ENCODE measurements at regions of chr7 and their contacts with region 1.

Region 1: GRCh38 chr7:4641667-4642467 is 40.2 kb upstream of the FOXK1 start:
- DNase-seq: peak; percentile 95
- H3K4me3 Mint-ChIP-seq: peak overlapping the region; percentile 92
- H3K27ac Mint-ChIP-seq: peak overlapping the region; percentile 94
- H3K4me1 Mint-ChIP-seq: peaks cover 12% of the 10 kb centered on the region
- H3K27me3 Mint-ChIP-seq: no peaks in the 10 kb centered on the region

Region 2: GRCh38 chr7:4683884-4684565 is 42.2 kb after region 1 on chr7:
- intact Hi-C with region 1: loop called (anchors 1 kb)
- DNase-seq: peak; percentile 26
- H3K4me3 Mint-ChIP-seq: peak overlapping the region; percentile 91
- H3K27ac Mint-ChIP-seq: peak overlapping the region; percentile 92
- H3K4me1 Mint-ChIP-seq: peaks cover 24% of the 10 kb centered on the region
- H3K27me3 Mint-ChIP-seq: no peaks in the 10 kb centered on the region

Region 3: DNA sequence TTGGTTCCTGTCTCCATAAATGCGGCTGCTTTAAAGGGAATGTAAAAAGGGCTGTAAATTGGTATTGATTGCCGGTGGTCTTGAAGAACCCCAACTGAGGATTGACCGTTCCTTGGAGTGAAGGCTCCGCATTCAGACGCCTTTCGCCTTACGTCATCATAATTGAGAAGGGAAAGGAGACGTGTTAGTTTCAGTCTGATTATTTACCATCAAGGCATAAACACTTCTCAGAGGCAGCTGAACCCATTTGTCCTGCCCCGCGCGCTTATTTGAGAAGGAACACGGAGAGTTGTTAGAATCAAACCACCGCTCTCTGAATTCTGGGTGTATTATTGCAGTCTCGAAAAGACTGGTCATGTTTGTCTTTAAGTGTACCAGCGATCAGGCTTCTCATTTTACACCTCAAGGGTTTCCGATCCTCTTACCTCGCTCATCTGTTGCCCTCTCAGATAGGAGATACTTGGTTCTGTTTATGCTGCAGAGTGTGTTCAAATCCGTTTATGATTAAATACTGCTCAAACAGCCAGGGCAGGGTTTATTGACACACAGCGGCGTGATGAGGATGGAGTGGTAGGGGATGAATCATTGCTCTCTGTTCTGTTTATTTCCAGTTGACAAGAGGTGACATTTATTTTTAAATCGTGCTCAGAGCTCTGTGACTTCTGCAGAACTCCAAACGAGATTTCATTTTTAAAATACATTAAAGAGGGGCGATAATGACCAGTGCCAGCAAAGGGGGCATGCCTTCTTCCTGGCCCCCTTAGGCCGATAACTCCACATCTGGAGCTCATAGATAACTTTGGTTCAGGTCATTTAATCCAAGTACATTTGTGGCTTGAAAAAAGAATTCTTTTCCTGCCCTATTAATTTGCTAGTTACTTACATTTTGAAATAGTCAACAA is 70.7 kb after region 1 on chr7:
- intact Hi-C with region 1: no loop called
- DNase-seq: no peak
- H3K4me3 Mint-ChIP-seq: no peak overlapping the region
- H3K27ac Mint-ChIP-seq: peak overlapping the region; percentile 63
- H3K4me1 Mint-ChIP-seq: peaks cover 17% of the 10 kb centered on the region
- H3K27me3 Mint-ChIP-seq: no peaks in the 10 kb centered on the region

Region 4: GRCh38 chr7:4775250-4775847 is 133.5 kb after region 1 on chr7 and contains the start of gene AP5Z1:
- intact Hi-C with region 1: loop called (anchors 1 kb)
- DNase-seq: peak; percentile 90
- H3K4me3 Mint-ChIP-seq: peak within 1 kb of the TSS; percentile 95
- H3K27ac Mint-ChIP-seq: peak within 1 kb of the TSS; percentile 96
- H3K4me1 Mint-ChIP-seq: peaks cover 31% of the 10 kb centered on the region
- H3K27me3 Mint-ChIP-seq: no peaks in the 10 kb centered on the region
- total RNA-seq, gene AP5Z1: 41.5 and 45.9 TPM in 2 replicates

Measured in activated T-helper 2 cell treated with anti-CD3 and anti-CD28 coated beads, Interferon-gamma antibody, Interleukin-2, Interleukin-4, amounts not matched to agents 10 μg/mL and 5 μg/mL and 100 μg/mL, durations not matched to agents 14 hours and 24 hours and 36 hours (primary cell).